ENCODE measurements at regions of chr17 and their contacts with region 1.

Region 1: DNA sequence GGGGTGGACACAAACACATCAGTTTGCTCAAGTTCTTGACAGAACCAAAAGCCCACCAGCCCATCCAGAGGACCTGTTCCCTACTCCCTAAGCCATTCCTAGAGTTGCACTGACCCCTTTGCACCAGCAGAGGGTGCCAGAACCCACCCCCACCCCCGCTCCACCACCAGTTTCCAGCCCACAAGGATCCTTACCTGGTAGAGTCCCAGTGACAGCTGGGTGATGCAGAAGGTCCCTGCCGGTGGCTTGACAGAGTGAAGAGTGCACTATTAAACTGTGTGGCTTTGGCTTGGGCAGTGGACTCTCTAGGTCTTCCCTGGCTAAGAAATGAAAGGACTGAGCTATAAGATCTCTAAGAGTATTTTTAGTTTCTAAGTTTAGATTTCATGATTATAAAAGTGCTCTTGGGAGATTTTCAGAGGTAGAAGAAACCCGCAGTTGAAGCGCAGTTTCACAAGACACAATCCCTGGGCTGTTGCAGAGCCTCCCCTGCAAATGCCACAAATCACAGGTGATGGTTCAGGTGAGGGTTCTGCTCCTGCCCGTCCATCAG is 73.3 kb upstream of the MTMR4 start:
- DNase-seq: peak; percentile 77
- CTCF ChIP-seq: peak; percentile 86

Region 2: DNA sequence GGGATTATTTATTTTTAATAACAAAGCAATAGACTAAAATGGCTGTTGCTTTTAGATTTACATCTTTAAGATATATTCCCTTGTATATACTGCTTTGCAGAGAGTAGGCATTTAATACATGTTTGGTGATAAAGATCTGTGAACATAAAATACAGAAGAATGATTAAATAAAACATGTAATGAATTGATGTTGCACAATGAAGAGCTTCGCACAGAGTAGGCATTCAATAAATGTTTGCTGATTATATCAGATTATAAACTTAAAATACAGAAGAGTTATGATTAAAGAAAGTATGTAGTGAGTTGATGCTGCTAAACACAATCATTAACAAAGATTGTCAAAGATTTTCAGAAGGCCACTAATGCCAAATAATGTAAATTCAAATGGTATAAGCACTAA is 124.0 kb before region 1 on chr17:
- CTCF ChIA-PET with region 1: no interaction called
- POLR2A ChIA-PET with region 1: no interaction called
- DNase-seq: no peak
- CTCF ChIP-seq: no peak

Region 3: DNA sequence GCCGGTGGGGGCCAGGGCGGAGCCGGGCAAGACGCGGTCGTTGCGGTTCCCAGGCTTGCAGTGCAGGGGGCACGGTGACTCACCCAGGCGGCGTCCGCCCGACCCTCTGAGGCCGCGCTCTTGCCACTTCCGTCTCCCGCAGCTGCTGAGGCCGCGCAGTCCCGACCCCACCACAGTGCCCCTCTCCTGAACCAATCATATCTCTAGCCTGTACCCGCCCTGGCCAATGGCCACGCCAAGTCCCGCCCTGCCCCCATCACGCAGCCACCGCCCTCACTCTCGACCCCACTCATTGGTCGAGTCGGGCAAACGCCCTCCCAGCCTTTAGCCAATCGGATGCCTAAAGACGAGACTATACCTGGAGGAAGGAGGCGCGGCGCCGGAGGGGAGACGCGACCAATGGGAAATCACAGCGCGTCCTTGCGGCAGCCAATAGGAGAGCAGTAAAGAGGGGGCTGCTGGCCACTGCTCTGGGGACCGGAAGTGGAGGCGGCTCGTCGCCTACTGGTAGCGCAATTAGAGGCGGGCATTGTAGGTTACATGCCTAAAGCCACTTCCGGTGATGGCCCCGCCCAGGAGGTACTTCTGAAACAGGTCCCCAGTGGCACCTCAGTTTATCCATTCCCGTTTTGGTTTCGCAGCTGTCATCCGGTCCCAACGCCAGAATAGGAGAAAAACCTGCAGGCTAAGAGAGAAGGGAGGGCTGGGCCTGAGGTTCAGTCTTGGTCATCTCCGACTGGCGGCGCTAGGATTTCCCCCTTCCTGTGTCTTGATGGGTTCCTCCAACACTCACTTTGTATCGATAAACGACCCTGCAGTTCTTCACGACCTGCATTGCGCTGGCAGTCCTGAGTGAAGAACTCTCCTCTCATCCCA is 69.8 kb before region 1 on chr17:
- CTCF ChIA-PET with region 1: interaction called, 13 read pairs
- POLR2A ChIA-PET with region 1: no interaction called
- DNase-seq: peak; percentile 96
- CTCF ChIP-seq: no peak

Region 4: DNA sequence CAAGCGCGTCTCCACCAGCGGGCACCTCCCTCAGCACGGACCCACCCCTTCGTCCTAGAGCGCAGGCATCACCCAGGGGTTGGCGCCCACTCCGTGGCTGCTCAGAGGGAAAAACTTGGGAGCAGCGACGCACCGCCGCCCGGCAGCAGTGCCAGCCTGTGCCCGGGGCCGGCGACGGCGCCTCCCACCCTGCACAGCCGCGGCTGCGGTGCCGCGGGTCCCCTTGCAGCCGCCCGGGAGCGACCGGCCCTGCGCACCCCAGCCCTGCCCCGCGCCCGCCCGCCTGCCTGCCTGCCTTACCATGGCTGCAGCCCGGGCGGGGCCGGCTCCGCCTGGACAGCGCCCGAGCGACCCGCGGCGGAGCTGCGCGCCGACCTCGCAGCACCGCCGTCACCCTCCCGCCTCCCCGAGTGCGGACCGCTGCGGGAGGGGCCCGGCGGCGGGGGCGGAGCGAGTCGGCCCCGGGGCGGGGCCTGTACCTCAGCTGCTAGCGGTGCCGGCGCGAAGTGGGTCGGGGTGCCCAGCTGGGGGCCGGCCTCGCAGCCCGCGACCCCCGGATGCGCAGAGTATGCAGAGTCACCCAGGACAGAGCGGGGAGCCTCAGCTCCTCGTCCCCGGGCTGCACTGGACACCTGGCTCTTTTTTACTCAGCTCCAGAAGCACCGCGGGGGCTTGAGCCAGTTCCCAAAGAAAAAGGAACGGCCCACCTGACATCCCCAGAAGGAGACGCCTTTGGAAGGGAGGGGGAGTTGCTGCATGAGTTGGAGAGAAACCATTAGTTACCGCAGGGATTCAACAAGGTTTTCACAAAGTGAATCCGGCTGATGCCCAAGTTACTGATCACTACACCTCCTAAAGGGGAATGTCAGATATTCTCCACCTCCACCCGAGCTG is 55.9 kb before region 1 on chr17:
- CTCF ChIA-PET with region 1: interaction called, 11 read pairs
- POLR2A ChIA-PET with region 1: no interaction called
- DNase-seq: peak; percentile 78
- CTCF ChIP-seq: no peak

Region 5: DNA sequence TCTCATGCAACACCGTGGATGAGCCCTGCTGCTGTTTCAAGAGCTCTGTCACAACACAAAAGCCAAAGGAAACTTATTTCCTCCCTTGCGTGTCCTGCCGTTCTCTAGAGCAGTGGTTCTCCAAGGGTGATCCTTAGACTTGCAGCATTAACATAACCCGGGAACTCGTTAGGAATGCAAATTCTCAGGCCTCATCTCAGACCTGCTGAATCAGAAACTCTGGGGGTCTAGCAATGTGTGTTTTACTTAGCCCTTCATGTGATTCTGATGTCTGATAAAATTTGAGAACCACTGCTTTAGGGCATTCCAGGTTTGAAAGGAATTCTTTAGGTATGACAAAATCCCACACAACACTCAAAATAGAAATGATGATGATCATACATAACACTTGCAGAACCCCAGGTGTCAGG is 22.0 kb before region 1 on chr17:
- CTCF ChIA-PET with region 1: interaction called, 13 read pairs
- POLR2A ChIA-PET with region 1: no interaction called
- DNase-seq: no peak
- CTCF ChIP-seq: no peak

Region 6: GRCh38 chr17:58658804-58659713 is 71.3 kb after region 1 on chr17:
- CTCF ChIA-PET with region 1: interaction called, 3 read pairs
- POLR2A ChIA-PET with region 1: interaction called, 11 read pairs
- DNase-seq: peak; percentile 85
- CTCF ChIP-seq: no peak

Region 7: GRCh38 chr17:58677194-58677880 is 89.6 kb after region 1 on chr17:
- CTCF ChIA-PET with region 1: no interaction called
- POLR2A ChIA-PET with region 1: no interaction called
- DNase-seq: no peak
- CTCF ChIP-seq: no peak

Region 8: DNA sequence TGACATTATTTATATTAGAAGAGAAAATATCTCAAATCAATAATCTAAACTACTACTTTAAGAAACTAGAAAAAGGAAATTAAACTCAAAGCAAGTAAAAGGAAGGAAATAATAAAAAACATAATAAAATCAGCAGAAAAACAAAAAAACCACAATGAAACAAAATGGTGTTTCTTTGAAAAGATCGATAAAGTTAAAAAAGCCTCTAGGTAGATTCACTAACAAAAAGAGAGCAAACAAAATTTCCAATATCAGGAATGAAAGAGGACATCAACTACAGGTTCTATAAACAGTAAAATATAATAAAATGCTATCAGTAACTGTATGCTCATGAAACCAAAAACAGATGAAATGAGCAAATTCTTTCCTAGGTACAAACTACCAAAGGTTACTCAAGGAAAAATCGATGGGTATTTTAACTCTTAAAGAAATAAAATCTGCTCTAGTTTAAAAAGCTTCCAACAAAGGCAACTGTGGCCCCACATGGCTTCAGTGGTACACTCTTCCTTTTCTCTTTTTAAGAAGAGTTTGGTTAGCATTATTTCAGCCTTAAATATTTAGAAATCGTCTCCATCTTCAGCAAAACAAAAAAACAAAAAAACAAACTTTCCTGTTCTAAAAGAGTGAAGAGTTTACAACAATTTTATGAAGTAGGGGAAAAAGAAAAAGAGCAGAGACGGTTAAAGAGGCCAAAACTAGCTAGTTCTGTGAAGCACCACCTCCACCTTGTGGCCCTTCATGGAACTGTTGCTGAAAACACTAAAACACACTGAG is 416.7 kb after region 1 on chr17:
- CTCF ChIA-PET with region 1: interaction called, 33 read pairs
- POLR2A ChIA-PET with region 1: no interaction called
- DNase-seq: peak; percentile 57
- CTCF ChIP-seq: peak; percentile 88

Measured in GM10248 (cell line).